Mammary epithelial cell (primary cell): ENCODE measurements at regions of chr11 and their contacts with region 1.

Region 1: GRCh38 chr11:100328658-100329315 is 358.3 kb upstream of the ARHGAP42 start:
- DNase-seq: peak; percentile 87
- H3K4me3 ChIP-seq: no peak overlapping the region
- H3K27ac ChIP-seq: no peak overlapping the region
- H3K4me1 ChIP-seq: peaks cover 15% of the 10 kb centered on the region
- H3K27me3 ChIP-seq: no peaks in the 10 kb centered on the region
- CTCF ChIP-seq: peak; percentile 4 to 46

Region 2: GRCh38 chr11:100525635-100526034 is 196.8 kb after region 1 on chr11:
- CTCF ChIA-PET with region 1: no interaction called
- dilution Hi-C with region 1: no loop called
- in situ Hi-C with region 1: no loop called
- intact Hi-C with region 1: loop called (anchors 1 kb)
- DNase-seq: peak; percentile 3
- H3K4me3 ChIP-seq: no peak overlapping the region
- H3K27ac ChIP-seq: no peak overlapping the region
- H3K4me1 ChIP-seq: no peaks in the 10 kb centered on the region
- H3K27me3 ChIP-seq: peaks cover 2% of the 10 kb centered on the region
- CTCF ChIP-seq: peak; percentile 28 to 51

Region 3: GRCh38 chr11:100805506-100806199 is 476.9 kb after region 1 on chr11:
- CTCF ChIA-PET with region 1: no interaction called
- dilution Hi-C with region 1: no loop called
- in situ Hi-C with region 1: no loop called
- intact Hi-C with region 1: no loop called
- DNase-seq: peak; percentile 26
- H3K4me3 ChIP-seq: no peak overlapping the region
- H3K27ac ChIP-seq: no peak overlapping the region
- H3K4me1 ChIP-seq: peaks cover 16% of the 10 kb centered on the region
- H3K27me3 ChIP-seq: no peaks in the 10 kb centered on the region
- CTCF ChIP-seq: no peak